ENCODE measurements at regions of chr5 and their contacts with region 1.

Region 1: DNA sequence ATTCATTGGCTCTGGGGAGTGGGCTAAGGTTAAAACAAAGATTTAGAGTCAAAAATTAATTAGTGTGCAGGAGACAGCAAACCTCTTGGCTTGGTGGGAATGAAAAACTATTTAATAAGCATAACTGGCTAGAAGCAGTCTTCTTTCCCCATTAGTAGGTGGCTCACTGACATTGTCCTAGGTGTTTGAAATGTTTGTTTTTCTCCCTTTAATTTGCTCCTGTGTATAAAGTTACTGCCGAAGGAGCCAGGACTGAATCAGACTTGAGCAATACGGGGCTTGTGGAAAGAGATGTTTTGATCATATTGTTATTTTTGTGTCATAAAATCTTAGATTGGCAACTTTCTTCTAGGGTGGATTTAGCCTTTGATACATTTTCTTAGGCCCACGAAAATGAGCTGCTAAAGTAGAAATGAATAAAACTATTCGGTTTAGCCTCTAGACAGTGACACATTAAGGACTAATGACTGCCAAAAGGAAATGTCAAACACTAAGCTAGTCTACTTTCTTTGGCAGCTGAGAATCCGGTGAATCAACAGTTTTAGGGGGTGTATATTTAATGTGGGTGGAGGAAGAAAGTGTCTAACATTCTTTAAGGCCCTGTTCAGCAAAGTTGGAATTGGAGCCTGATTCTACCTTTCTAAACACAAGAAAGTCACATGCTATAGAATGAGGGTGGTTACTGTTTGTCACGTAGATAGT is 30.2 kb downstream of the LRRTM2 start:
- DNase-seq: peak; percentile 88
- H3K4me3 Mint-ChIP-seq: peak overlapping the region; percentile 7
- H3K27ac Mint-ChIP-seq: peak overlapping the region; percentile 89
- H3K4me1 Mint-ChIP-seq: peaks cover 42% of the 10 kb centered on the region
- H3K27me3 Mint-ChIP-seq: no peaks in the 10 kb centered on the region
- CTCF ChIP-seq: no peak

Region 2: DNA sequence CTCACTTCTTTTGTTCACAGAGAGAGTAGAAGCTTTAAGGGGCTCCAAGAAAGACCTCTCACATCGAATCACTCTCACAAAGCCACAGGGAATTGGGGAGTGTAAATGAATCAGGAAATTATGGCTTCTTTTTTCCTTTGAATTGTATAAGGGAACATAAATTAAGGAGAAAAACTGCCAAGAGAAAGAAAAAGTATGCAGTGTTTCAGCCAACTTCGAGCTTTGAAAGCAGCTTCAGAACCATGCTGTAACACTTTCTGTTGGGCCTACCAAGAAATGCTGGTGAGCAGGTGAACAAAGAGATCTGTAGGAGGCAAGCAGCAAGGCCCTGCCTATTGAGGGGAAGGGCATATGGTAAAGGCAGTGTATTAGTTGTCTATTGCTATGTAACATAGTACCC is 125.2 kb before region 1 on chr5:
- CTCF ChIA-PET with region 1: no interaction called
- POLR2A ChIA-PET with region 1: no interaction called
- intact Hi-C with region 1: no loop called
- DNase-seq: no peak
- H3K4me3 Mint-ChIP-seq: no peak overlapping the region
- H3K27ac Mint-ChIP-seq: no peak overlapping the region
- H3K4me1 Mint-ChIP-seq: peaks cover 41% of the 10 kb centered on the region
- H3K27me3 Mint-ChIP-seq: no peaks in the 10 kb centered on the region
- CTCF ChIP-seq: no peak

Region 3: DNA sequence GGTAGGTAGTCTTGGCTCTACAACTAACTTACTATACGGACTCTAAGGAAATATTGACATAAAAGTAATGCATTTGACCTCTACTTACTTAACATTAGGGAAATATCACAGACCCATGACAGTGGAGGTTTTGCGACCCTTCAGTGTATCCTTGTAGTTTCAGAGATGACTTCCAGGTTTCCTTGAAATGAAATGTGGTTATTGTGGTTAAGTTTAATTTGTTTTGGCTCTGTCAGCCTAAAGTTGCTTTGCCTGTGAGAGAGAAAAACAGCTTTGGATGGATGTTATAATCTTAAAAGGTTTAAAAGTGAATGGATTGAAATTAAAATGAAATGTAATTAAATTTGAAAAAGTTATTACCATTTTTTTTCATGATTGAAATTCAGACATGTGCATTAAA is 12.7 kb before region 1 on chr5:
- CTCF ChIA-PET with region 1: interaction called, 6 read pairs
- POLR2A ChIA-PET with region 1: interaction called, 27 read pairs
- intact Hi-C with region 1: no loop called
- DNase-seq: no peak
- H3K4me3 Mint-ChIP-seq: no peak overlapping the region
- H3K27ac Mint-ChIP-seq: peak overlapping the region; percentile 0
- H3K4me1 Mint-ChIP-seq: peaks cover 34% of the 10 kb centered on the region
- H3K27me3 Mint-ChIP-seq: no peaks in the 10 kb centered on the region
- CTCF ChIP-seq: no peak

Region 4: GRCh38 chr5:138869763-138870500 is 25.0 kb after region 1 on chr5:
- CTCF ChIA-PET with region 1: interaction called, 6 read pairs
- POLR2A ChIA-PET with region 1: interaction called, 11 read pairs
- intact Hi-C with region 1: no loop called
- DNase-seq: peak; percentile 21
- H3K4me3 Mint-ChIP-seq: peak overlapping the region; percentile 50
- H3K27ac Mint-ChIP-seq: peak overlapping the region; percentile 90
- H3K4me1 Mint-ChIP-seq: peaks cover 55% of the 10 kb centered on the region
- H3K27me3 Mint-ChIP-seq: no peaks in the 10 kb centered on the region
- CTCF ChIP-seq: no peak

Region 5: GRCh38 chr5:139004374-139005307 is 159.7 kb after region 1 on chr5:
- CTCF ChIA-PET with region 1: no interaction called
- POLR2A ChIA-PET with region 1: no interaction called
- intact Hi-C with region 1: no loop called
- DNase-seq: no peak
- H3K4me3 Mint-ChIP-seq: no peak overlapping the region
- H3K27ac Mint-ChIP-seq: no peak overlapping the region
- H3K4me1 Mint-ChIP-seq: peaks cover 6% of the 10 kb centered on the region
- H3K27me3 Mint-ChIP-seq: no peaks in the 10 kb centered on the region
- CTCF ChIP-seq: no peak